PC-9 (cell line): ENCODE measurements at regions of chr19 and their contacts with region 1.

Region 1: DNA sequence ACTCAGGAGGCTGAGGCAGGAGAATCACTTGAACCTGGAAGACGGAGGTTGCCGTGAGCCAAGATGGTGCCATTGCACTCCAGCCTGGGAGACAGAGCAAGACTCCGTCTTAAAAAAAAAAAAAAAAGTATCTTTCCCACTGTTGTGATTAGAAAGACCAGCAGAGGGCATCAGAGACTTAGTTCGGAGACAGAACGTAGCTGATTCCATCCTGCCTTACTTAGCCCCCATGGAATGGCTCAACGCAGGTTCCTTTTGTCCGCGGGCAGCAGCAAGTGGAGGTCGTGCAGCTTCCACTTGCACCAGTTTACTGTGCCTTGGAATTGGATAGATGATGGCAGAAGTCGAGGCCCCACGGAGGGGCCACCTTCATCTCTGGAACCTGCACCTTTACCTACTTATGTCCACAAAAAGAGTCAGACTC is 8.1 kb downstream of the TIMM29 start:
- DNase-seq: peak; percentile 45 to 75
- H3K4me3 ChIP-seq: no peak overlapping the region
- H3K27ac ChIP-seq: no peak overlapping the region
- H3K4me1 ChIP-seq: peaks cover 49% of the 10 kb centered on the region
- H3K27me3 ChIP-seq: no peaks in the 10 kb centered on the region
- CTCF ChIP-seq: peak; percentile 84

Region 2: GRCh38 chr19:10885201-10886169 is 51.2 kb before region 1 on chr19:
- CTCF ChIA-PET with region 1: interaction called, 12 read pairs
- POLR2A ChIA-PET with region 1: no interaction called
- intact Hi-C with region 1: no loop called
- DNase-seq: no peak
- H3K4me3 ChIP-seq: no peak overlapping the region
- H3K27ac ChIP-seq: no peak overlapping the region
- H3K4me1 ChIP-seq: 0 out of 2 replicates have a peak, but pooled peaks cover 6% of the 10 kb centered on the region
- H3K27me3 ChIP-seq: no peaks in the 10 kb centered on the region
- CTCF ChIP-seq: no peak

Region 3: DNA sequence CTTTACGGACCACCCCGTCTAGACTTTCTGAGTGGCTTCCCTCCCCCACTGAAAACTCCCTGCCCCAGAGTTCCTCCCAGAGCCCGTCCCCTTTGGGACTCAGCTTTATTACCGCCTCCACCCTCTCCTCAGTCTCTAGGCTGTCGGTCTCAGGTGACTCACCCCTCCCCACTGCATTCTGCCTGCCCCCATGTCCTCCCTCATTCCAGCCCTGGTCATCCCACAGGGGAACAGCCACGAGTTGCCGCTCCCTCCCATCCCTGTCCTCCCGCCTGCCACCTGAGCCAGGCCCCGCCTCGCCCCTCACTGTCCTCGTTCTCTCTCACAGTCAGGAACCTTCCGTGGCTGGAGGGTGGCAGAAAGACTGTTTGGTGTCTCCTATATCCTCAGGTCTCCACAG is 81.5 kb after region 1 on chr19:
- CTCF ChIA-PET with region 1: no interaction called
- POLR2A ChIA-PET with region 1: no interaction called
- intact Hi-C with region 1: loop called (anchors 1 kb)
- DNase-seq: peak; percentile 47 to 86
- H3K4me3 ChIP-seq: no peak overlapping the region
- H3K27ac ChIP-seq: no peak overlapping the region
- H3K4me1 ChIP-seq: no peaks in the 10 kb centered on the region
- H3K27me3 ChIP-seq: no peaks in the 10 kb centered on the region
- CTCF ChIP-seq: no peak

Region 4: GRCh38 chr19:11035441-11036377 is 99.0 kb after region 1 on chr19:
- CTCF ChIA-PET with region 1: interaction called, 3 read pairs
- POLR2A ChIA-PET with region 1: no interaction called
- intact Hi-C with region 1: loop called (anchors 5 kb)
- DNase-seq: peak; percentile 94 to 96
- H3K4me3 ChIP-seq: no peak overlapping the region
- H3K27ac ChIP-seq: peak overlapping the region; percentile 28
- H3K4me1 ChIP-seq: peaks cover 11% of the 10 kb centered on the region
- H3K27me3 ChIP-seq: no peaks in the 10 kb centered on the region
- CTCF ChIP-seq: peak; percentile 96

Region 5: GRCh38 chr19:11203194-11204075 is 266.8 kb after region 1 on chr19:
- CTCF ChIA-PET with region 1: no interaction called
- POLR2A ChIA-PET with region 1: no interaction called
- intact Hi-C with region 1: loop called (anchors 5 kb)
- DNase-seq: peak; percentile 69 to 75
- H3K4me3 ChIP-seq: no peak overlapping the region
- H3K27ac ChIP-seq: no peak overlapping the region
- H3K4me1 ChIP-seq: peaks cover 18% of the 10 kb centered on the region
- H3K27me3 ChIP-seq: no peaks in the 10 kb centered on the region
- CTCF ChIP-seq: peak; percentile 94

Region 6: DNA sequence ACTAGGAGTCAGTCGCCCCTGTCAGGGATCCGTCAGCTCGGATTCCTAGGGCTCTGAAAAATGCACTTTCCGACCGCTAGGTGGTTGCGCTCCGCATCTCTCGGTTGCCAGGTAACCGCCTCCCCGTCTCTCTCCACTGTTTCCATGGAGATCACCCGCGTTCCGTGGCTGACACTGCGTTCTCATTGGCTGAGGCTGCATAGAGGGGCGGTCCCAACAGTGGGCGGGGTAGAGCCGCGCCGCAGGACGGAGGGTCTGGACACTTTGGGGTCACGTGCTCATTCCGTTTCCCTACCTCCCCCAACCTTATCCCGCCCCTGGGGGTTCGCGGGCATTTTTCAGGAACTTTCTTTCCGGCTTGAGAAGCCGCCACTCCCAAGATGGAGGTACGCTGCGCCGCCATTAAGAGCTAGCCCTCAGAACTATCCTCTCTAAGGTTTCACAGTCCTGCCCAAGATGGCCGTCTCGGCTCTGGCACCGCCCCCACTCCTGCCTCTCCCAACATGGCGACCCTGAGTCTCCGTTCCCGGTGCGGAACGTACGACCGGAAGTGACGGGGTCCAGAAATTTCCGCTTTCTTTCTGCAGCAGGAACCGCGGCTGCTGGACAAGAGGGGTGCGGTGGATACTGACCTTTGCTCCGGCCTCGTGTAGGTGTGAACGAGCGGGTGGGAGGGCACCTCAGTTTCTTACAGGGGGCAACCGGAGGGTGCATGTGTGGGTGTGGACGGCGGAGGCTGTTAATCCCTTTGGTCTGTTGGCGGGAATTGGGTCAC is 498.6 kb after region 1 on chr19 and contains the starts of genes ODAD3 and PRKCSH:
- CTCF ChIA-PET with region 1: no interaction called
- POLR2A ChIA-PET with region 1: no interaction called
- intact Hi-C with region 1: loop called (anchors 5 kb)
- DNase-seq: peak; percentile 99
- H3K4me3 ChIP-seq: peak within 1 kb of the TSS; percentile 76
- H3K27ac ChIP-seq: peak within 1 kb of the TSS; percentile 67
- H3K4me1 ChIP-seq: peaks cover 14% of the 10 kb centered on the region
- H3K27me3 ChIP-seq: no peaks in the 10 kb centered on the region
- CTCF ChIP-seq: peak; percentile 96
- total RNA-seq, gene ODAD3: 0.15 and 0.39 TPM in 2 replicates
- total RNA-seq, gene PRKCSH: 410 and 412 TPM in 2 replicates